ENCODE measurements at regions of chr12 and their contacts with region 1.

Region 1: GRCh38 chr12:6140651-6141447 is 16.4 kb upstream of the VWF start:
- DNase-seq: peak; percentile 85
- H3K4me3 ChIP-seq: no peak overlapping the region
- H3K27ac ChIP-seq: peak overlapping the region; percentile 86
- H3K4me1 ChIP-seq: peaks cover 42% of the 10 kb centered on the region
- H3K27me3 ChIP-seq: no peaks in the 10 kb centered on the region
- CTCF ChIP-seq: no peak
- POLR2A ChIP-seq: peak; percentile 25

Region 2: GRCh38 chr12:6092784-6093722 is 47.8 kb before region 1 on chr12:
- CTCF ChIA-PET with region 1: interaction called, 3 read pairs
- POLR2A ChIA-PET with region 1: no interaction called
- dilution Hi-C with region 1: no loop called
- intact Hi-C with region 1: loop called (anchors 2 kb)
- DNase-seq: peak; percentile 92
- H3K4me3 ChIP-seq: no peak overlapping the region
- H3K27ac ChIP-seq: peak overlapping the region; percentile 60
- H3K4me1 ChIP-seq: peaks cover 87% of the 10 kb centered on the region
- H3K27me3 ChIP-seq: no peaks in the 10 kb centered on the region
- CTCF ChIP-seq: peak in 1 of 2 donors; percentile 14
- POLR2A ChIP-seq: no peak

Region 3: DNA sequence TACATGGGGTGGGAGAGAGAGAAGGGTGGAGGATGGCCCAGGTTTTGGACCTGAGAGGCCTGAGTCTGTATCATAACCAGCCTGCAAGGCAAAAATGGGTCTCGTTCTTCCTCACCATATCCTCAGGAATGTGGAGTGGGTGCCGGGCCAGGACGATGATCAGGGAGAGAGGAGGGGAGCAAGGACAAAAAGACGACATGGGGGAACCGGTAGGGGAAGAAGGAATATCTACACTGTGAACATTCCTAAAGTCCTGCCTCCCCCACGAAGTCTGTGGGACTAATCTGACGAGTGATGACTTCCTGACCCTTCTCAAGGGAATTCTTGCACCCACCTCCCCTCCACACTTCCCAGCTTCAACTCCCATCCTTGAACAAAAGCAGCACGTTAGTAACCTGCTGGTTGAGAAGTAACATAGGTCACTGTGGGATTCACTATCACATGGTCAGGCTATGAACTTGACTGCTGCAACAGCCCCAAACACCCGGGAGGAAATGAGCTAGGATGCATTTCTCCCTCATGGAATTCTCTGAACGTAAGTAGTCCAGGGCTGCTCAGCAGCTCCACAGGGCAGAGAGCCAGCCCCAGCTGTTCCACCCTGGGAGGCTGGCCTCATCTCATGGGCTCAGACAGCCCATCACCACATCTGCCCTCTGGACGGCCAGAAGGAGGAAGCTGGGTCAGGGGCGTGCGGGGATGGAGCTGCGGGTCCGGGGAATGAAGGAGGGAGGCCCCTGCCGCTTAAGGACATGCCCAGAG is 20.5 kb after region 1 on chr12:
- CTCF ChIA-PET with region 1: interaction called, 11 read pairs
- POLR2A ChIA-PET with region 1: interaction called, 3 read pairs
- dilution Hi-C with region 1: no loop called
- intact Hi-C with region 1: loop called (anchors 1 kb)
- DNase-seq: peak; percentile 88
- H3K4me3 ChIP-seq: no peak overlapping the region
- H3K27ac ChIP-seq: peak overlapping the region; percentile 94
- H3K4me1 ChIP-seq: peaks cover 37% of the 10 kb centered on the region
- H3K27me3 ChIP-seq: no peaks in the 10 kb centered on the region
- CTCF ChIP-seq: no peak
- POLR2A ChIP-seq: peak; percentile 52